ENCODE measurements at regions of chr19 and their contacts with region 1.

Region 1: GRCh38 chr19:42325273-42325895 is at the start of gene MEGF8:
- DNase-seq: peak; percentile 100
- H3K4me3 Mint-ChIP-seq: peak within 1 kb of the TSS; percentile 93
- H3K27ac Mint-ChIP-seq: peak within 1 kb of the TSS; percentile 87
- H3K4me1 Mint-ChIP-seq: peaks cover 16% of the 10 kb centered on the region
- H3K27me3 Mint-ChIP-seq: peaks cover 30% of the 10 kb centered on the region
- total RNA-seq, gene MEGF8: 8.4 and 9.1 TPM in 2 replicates

Region 2: DNA sequence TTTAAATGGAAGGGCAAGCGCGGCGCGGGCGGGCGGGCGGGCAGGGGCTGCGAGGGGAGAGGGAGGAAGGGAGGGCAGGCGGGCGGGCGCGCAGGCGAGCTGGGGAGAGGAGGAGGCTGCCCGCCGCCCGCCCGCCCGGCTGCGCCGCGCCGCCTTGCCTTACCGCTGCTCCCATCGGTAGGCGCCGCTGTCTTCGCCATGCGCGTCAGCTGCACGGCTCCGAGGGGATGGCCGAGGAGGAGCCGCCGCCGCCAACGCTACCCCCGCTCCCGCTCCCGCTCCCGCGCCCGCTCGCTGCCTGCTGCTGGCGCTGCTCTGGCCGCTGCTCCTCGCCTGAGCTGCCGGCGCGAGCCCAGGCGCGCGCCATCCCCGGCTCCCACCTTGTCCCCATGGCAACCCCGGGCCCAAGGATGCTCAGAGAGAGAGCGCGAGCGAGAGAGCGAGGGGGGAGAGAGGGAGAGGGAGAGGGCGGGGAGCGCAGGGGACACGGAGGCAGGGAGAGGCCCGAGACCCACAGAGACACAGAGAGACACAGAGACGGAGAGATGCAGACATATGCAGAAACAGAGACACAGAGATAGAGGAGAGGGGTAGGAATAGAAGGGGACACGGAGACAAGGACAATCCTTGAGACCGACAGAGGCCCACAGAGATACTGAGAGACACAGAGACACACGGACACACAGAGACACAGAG is 148.2 kb before region 1 on chr19:
- intact Hi-C with region 1: loop called (anchors 5 kb)
- DNase-seq: peak; percentile 94
- H3K4me3 Mint-ChIP-seq: peak overlapping the region; percentile 90
- H3K27ac Mint-ChIP-seq: no peak overlapping the region
- H3K4me1 Mint-ChIP-seq: peaks cover 16% of the 10 kb centered on the region
- H3K27me3 Mint-ChIP-seq: peaks cover 41% of the 10 kb centered on the region

Region 3: DNA sequence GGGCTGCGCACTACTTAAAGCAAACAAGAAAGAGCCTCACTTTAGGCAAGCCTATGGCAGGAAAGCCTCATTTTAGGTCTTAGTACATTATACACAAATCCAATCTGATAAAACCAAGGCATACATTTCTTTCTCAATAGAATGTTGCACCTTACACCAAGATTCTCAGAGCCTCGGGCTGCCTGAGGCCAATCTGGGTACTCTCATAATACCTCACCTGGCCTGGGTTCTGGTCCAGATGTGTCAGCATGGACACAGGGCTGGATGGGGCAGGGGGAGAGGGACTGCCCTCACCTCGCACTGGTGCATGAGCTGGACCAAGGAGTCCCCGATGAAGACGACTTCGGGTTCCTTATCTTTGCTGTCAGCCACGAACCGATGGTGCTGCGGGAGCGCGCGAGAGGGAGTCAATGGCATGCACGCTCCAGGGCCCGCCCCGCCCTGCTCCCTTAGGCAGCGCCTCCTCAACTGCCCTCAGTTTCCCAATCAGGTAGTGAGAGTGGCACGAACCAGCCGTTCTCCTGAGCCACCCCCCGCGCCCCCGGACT is 23.7 kb before region 1 on chr19 and contains the start of gene PRR19:
- intact Hi-C with region 1: loop called (anchors 1 kb)
- DNase-seq: no peak
- H3K4me3 Mint-ChIP-seq: peak within 1 kb of the TSS; percentile 92
- H3K27ac Mint-ChIP-seq: peak within 1 kb of the TSS; percentile 90
- H3K4me1 Mint-ChIP-seq: peaks cover 21% of the 10 kb centered on the region
- H3K27me3 Mint-ChIP-seq: no peaks in the 10 kb centered on the region
- total RNA-seq, gene PRR19: 1.3 and 1.6 TPM in 2 replicates

Region 4: GRCh38 chr19:42396381-42397262 is 71.2 kb after region 1 on chr19:
- intact Hi-C with region 1: loop called (anchors 2 kb)
- DNase-seq: peak; percentile 99
- H3K4me3 Mint-ChIP-seq: peak overlapping the region; percentile 94
- H3K27ac Mint-ChIP-seq: peak overlapping the region; percentile 91
- H3K4me1 Mint-ChIP-seq: peaks cover 30% of the 10 kb centered on the region
- H3K27me3 Mint-ChIP-seq: peaks cover 8% of the 10 kb centered on the region

Measured in activated CD4-positive, alpha-beta T cell treated with anti-CD3 and anti-CD28 coated beads, Interleukin-2, amount 10 ng/mL, durations not matched to agents 24 days and 14 days (primary cell).